ENCODE measurements at regions of chr2 and their contacts with region 1.

Region 1: GRCh38 chr2:25342372-25343186 is 854 bp upstream of the DNMT3A start:
- H3K4me3 Mint-ChIP-seq: peak overlapping the region; percentile 83
- H3K27ac Mint-ChIP-seq: peak overlapping the region; percentile 83
- H3K4me1 Mint-ChIP-seq: peaks cover 34% of the 10 kb centered on the region
- H3K27me3 Mint-ChIP-seq: peaks cover 21% of the 10 kb centered on the region

Region 2: DNA sequence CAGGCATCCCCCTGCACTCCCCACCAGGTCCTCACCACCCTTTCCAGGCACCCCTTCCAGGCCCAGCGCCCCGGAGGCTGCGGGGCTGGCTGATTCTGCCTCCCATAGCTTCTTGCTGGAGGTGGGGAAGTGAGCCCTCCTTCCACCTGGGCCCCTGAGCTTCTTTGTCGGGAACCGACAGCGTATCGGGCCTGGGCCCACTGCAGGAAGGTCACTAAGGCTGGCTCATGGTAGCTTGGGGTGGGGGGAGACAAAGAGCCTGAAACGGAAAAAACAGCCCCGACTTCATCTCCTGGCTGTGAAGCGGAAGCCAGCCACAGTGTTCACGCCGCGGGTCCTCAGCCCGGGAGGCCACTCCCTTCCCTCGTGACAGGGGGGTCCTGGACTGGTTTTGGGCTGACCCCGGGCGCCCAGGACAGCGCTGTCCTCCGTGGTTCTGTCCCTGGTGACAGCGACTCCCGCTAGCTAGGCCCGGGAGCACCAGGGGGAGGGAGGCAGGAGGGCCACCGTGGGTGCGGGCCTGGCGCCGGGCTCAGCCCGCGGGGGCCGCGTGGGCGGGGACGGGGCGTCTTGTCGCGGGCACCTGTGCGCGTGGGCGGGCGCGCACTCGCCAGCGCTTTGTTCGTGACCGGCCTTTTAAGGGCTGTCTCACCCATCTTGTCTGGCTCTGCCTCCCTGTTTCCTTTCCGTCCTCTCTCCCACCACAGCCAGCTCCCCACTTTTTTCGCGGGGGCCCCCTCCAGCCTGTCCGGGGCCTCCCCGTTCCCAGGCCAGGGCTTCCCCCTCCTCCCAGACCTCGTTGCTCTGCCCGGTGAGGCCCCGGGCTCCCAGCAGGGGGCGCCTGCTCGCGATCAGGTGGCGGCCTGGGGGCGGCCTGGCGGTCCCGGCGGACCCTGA is 65.8 kb before region 1 on chr2:
- intact Hi-C with region 1: loop called (anchors 10 kb)
- H3K4me3 Mint-ChIP-seq: peak overlapping the region; percentile 63
- H3K27ac Mint-ChIP-seq: peak overlapping the region; percentile 89
- H3K4me1 Mint-ChIP-seq: peaks cover 74% of the 10 kb centered on the region
- H3K27me3 Mint-ChIP-seq: no peaks in the 10 kb centered on the region

Region 3: GRCh38 chr2:25309402-25309801 is 33.2 kb before region 1 on chr2:
- intact Hi-C with region 1: loop called (anchors 5 kb)
- H3K4me3 Mint-ChIP-seq: no peak overlapping the region
- H3K27ac Mint-ChIP-seq: no peak overlapping the region
- H3K4me1 Mint-ChIP-seq: peaks cover 73% of the 10 kb centered on the region
- H3K27me3 Mint-ChIP-seq: peaks cover 18% of the 10 kb centered on the region

Region 4: GRCh38 chr2:25521665-25522387 is 179.2 kb after region 1 on chr2:
- intact Hi-C with region 1: loop called (anchors 5 kb)
- H3K4me3 Mint-ChIP-seq: peak overlapping the region; percentile 23
- H3K27ac Mint-ChIP-seq: peak overlapping the region; percentile 50
- H3K4me1 Mint-ChIP-seq: peaks cover 6% of the 10 kb centered on the region
- H3K27me3 Mint-ChIP-seq: no peaks in the 10 kb centered on the region